ENCODE measurements at regions of chr5 and their contacts with region 1.

Region 1: GRCh38 chr5:177390363-177391300 is 6.4 kb downstream of the SLC34A1 start:
- DNase-seq: peak; percentile 91
- CTCF ChIP-seq: peak; percentile 90

Region 2: DNA sequence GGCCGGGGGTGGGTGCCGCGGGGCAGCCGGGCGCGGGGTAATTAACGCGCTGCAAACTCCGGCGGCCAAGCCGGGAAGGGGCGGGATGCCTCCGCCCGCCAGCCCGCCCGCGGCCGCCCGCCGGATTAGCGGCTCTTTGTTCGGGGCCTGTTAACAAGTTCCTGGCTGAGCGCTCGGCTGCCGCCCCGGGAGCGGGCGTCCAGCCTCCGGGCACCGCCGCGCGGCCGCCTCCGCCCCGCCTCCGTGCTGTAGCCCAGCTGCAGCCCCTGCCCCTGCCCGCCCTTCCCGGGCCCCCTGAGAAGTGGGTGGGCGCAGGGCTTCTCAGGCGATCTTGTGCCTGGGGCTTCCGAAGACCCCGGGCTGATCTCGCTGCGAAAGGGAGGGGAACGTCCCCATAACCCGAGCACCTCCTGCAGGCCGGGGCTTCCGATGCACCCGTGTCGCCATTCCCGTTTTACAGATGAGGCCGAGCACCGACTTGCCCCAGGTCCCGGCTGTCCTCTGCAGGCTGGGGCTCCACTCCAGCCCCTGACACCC is 572.7 kb before region 1 on chr5:
- CTCF ChIA-PET with region 1: no interaction called
- POLR2A ChIA-PET with region 1: no interaction called
- DNase-seq: no peak
- CTCF ChIP-seq: peak; percentile 25

Region 3: DNA sequence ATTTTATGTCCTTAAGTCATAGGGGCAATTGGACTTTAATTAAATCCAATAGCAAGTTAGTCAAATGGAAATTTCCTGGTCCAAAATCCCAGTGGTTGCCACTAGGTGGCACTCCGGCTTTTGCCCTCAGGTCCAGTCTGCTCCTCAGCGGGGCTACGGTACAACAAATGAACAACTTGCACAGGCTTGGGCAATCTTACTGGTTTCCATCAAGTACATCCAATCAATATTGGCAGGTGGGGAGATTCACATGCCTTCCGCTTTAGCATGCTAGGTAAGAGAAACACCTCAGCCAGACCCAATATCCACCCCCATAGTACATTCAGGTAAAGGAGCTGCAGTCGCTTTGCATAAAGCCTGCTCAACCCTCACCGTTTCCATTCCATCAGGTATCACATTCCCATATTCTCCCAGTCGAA is 72.7 kb before region 1 on chr5:
- CTCF ChIA-PET with region 1: interaction called, 30 read pairs
- POLR2A ChIA-PET with region 1: no interaction called
- DNase-seq: peak; percentile 70
- CTCF ChIP-seq: peak; percentile 85

Region 4: DNA sequence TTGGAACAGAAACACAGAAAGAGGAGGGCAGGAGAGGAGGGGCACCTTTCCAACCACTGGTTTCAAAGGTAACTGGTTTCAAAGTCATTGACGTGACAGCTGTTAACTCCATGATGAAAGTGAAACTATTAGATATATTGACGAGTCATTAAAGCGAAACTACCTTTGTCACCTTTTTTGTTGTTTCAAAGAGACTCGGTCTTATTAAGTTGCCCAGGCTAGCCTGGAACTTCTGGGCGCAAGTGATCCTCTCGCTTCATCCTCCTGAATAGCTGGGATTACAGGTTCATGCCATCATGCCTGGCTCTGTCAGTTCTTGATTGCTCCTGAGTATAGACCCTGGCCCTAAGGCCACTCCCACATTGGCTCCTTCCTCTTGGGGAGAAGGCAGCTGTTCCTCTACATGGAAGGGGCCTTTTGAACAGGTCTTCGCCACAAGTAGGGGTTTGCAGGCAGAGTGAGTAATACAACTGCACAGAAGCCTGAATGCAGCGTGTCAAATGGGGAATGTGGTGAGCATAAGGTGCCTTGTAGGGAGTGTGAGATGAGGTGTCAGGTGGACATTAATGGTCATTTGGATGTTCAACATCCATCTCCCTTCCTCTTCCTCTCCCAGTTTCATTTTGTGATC is 22.1 kb after region 1 on chr5:
- CTCF ChIA-PET with region 1: interaction called, 321 read pairs
- POLR2A ChIA-PET with region 1: no interaction called
- DNase-seq: no peak
- CTCF ChIP-seq: no peak

Region 5: GRCh38 chr5:177431317-177432142 is 40.9 kb after region 1 on chr5:
- CTCF ChIA-PET with region 1: interaction called, 27 read pairs
- POLR2A ChIA-PET with region 1: interaction called, 7 read pairs
- DNase-seq: peak; percentile 59
- CTCF ChIP-seq: no peak

Region 6: DNA sequence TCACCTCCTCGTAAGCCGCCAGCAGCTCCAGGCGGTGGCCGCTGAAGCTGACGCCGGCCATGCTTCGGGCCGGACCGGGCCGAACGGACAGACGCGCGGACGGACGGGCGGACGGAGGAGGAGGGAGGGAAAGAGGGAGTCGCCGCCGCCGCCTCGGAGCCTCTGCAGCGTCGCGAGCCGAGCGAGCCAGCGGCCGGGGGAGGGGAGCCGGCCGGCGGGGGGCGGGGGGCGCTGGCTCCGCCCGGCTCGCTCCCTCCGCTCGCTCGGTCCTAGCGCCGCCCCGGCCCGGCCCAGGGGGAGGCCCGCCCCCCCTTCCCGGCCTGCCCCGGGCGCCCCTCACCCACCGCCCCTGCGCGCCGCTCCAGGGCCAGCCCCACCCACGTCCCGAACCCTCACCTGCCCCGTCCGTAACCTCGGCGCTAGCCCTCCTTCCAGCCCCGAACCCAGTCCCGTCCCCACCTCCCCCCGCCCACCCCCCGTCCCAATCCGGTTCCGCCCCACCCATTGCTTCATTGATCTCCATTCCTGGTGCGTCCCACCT is 82.9 kb after region 1 on chr5 and contains the start of gene DBN1:
- CTCF ChIA-PET with region 1: interaction called, 12 read pairs
- POLR2A ChIA-PET with region 1: no interaction called
- DNase-seq: peak; percentile 87
- CTCF ChIP-seq: no peak

Region 7: GRCh38 chr5:177497292-177498033 is 106.8 kb after region 1 on chr5 and contains the start of gene PDLIM7:
- CTCF ChIA-PET with region 1: interaction called, 87 read pairs
- POLR2A ChIA-PET with region 1: interaction called, 3 read pairs
- DNase-seq: peak; percentile 97
- CTCF ChIP-seq: no peak